ENCODE measurements at regions of chr14 and their contacts with region 1.

Region 1: GRCh38 chr14:99393047-99393655 is 87.5 kb downstream of the SETD3 start:
- DNase-seq: peak; percentile 51
- H3K4me3 Mint-ChIP-seq: no peak overlapping the region
- H3K27ac Mint-ChIP-seq: no peak overlapping the region
- H3K4me1 Mint-ChIP-seq: peaks cover 10% of the 10 kb centered on the region
- H3K27me3 Mint-ChIP-seq: no peaks in the 10 kb centered on the region

Region 2: DNA sequence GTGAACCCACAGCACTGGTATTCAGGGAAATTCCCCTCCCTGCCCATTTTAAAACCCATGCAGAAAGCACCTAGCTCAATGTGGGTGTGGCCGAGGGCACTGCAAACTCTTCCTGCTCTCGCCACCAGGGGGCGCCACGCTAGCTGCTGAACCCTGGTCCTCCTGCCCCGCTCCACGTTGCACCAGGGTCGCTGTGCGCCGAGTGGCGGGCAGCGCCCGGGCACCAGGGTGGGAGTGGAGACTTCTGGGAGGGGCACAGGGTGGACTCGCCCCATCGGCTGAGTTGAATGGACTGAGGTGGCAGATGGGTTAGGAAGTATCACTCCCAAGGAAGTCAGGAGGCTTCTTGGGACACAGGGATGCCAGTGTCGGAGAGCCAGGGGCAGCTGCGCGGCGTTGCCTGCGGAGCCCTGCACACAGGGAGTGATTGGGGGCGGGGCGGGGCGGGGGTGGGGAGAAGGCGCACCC is 73.0 kb before region 1 on chr14:
- CTCF ChIA-PET with region 1: interaction called, 13 read pairs
- POLR2A ChIA-PET with region 1: no interaction called
- intact Hi-C with region 1: no loop called
- DNase-seq: peak; percentile 88
- H3K4me3 Mint-ChIP-seq: no peak overlapping the region
- H3K27ac Mint-ChIP-seq: no peak overlapping the region
- H3K4me1 Mint-ChIP-seq: peaks cover 4% of the 10 kb centered on the region
- H3K27me3 Mint-ChIP-seq: no peaks in the 10 kb centered on the region

Region 3: DNA sequence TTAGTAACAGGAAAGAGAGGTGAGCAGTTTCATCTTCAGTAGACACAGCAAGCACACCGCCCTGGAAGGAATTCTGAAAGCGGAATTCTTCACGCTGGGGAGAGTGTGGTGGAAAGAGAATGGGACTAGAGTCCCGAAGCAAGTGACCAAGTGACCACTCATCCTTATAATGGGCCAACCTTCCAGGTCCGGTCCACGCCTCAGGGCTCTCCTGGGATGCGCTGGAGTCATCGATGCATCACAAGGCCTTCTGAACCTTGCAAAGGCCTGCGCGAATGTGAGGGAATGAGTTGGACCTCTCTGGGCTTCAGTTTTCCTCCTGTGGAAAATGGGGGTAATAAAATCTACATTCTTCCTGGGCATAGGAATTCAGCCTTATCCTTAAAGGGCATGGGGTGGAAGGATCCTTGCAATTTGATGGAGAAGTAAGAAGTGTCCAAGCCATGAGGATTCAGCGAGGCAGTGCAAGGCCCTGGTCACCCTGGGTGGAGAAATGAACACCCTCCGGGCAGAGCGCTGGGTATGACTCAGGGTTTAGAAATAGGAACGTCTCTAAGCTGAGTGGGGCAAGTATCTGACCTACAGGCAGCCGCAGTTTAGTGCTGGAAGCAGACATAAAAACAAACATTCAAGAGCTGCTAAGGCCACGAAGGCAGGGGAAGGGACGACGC is 10.2 kb before region 1 on chr14:
- CTCF ChIA-PET with region 1: interaction called, 12 read pairs
- POLR2A ChIA-PET with region 1: no interaction called
- intact Hi-C with region 1: no loop called
- DNase-seq: no peak
- H3K4me3 Mint-ChIP-seq: no peak overlapping the region
- H3K27ac Mint-ChIP-seq: no peak overlapping the region
- H3K4me1 Mint-ChIP-seq: peaks cover 5% of the 10 kb centered on the region
- H3K27me3 Mint-ChIP-seq: peaks cover 35% of the 10 kb centered on the region

Region 4: GRCh38 chr14:99415496-99416281 is 22.5 kb after region 1 on chr14:
- CTCF ChIA-PET with region 1: interaction called, 401 read pairs
- POLR2A ChIA-PET with region 1: interaction called, 3 read pairs
- intact Hi-C with region 1: loop called (anchors 1 kb)
- DNase-seq: peak; percentile 70
- H3K4me3 Mint-ChIP-seq: no peak overlapping the region
- H3K27ac Mint-ChIP-seq: no peak overlapping the region
- H3K4me1 Mint-ChIP-seq: peaks cover 28% of the 10 kb centered on the region
- H3K27me3 Mint-ChIP-seq: no peaks in the 10 kb centered on the region

Region 5: GRCh38 chr14:99450266-99450665 is 57.1 kb after region 1 on chr14:
- CTCF ChIA-PET with region 1: interaction called, 10 read pairs
- POLR2A ChIA-PET with region 1: no interaction called
- intact Hi-C with region 1: no loop called
- DNase-seq: no peak
- H3K4me3 Mint-ChIP-seq: no peak overlapping the region
- H3K27ac Mint-ChIP-seq: no peak overlapping the region
- H3K4me1 Mint-ChIP-seq: no peaks in the 10 kb centered on the region
- H3K27me3 Mint-ChIP-seq: no peaks in the 10 kb centered on the region